WTC11 (cell line): ENCODE measurements at regions of chr19 and their contacts with region 1.

Region 1: DNA sequence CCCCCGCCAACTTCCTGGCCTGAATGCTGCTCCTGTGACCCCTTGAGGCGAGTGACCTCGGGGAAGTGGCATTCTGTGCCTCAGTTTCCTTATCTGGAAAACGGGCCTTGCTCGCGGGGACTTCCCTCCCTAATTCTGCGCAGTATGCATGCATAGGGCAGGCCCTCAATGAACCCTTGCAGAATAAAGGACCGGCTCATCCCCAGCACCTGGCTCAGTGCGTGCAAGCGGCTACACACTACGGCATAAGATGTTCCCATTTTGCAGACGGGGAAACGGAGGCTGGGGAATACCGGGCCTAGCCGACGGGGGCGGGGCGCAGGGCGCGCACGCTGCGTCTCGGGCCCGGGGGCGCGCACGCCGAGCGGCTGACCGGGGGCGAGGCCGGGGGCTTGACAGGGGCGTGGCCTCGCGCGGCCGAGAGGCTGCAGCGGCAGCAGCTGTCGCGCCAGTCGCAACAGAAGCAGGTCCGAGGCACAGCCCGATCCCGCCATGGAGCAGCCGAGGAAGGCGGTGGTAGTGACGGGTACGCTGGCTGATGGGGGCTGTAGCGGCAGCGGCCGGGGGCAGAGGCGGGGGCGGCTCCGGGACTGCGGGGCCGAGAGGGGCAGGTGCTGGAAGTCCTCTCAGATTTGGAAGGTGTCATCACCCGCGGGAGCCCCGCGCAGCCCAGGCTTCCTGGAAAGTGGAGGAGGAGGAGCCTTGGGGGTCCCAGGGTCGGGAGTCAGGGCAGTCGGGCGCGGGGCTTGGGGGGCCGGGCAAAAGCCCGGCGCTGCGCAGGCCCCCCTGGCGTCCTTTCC is at the start of gene PGPEP1:
- DNase-seq: peak; percentile 81
- ATAC-seq: peak; percentile 44
- H3K4me3 Mint-ChIP-seq: peak within 1 kb of the TSS; percentile 79
- H3K27ac Mint-ChIP-seq: peak within 1 kb of the TSS; percentile 96; the same call in 1 of the 2 replicates
- H3K4me1 Mint-ChIP-seq: peaks cover 43% of the 10 kb centered on the region
- H3K27me3 Mint-ChIP-seq: no peaks in the 10 kb centered on the region
- CTCF ChIP-seq: no peak
- total RNA-seq, gene PGPEP1: 39.2 to 68.1 TPM (median 40.8 TPM) in 3 replicates

Region 2: GRCh38 chr19:18274781-18275356 is 65.5 kb before region 1 on chr19:
- CTCF ChIA-PET with region 1: interaction called, 61 read pairs
- POLR2A ChIA-PET with region 1: interaction called, 4 read pairs
- DNase-seq: no peak
- ATAC-seq: no peak
- H3K4me3 Mint-ChIP-seq: no peak overlapping the region
- H3K27ac Mint-ChIP-seq: peak overlapping the region; percentile 53; the same call in 1 of the 2 replicates
- H3K4me1 Mint-ChIP-seq: peaks cover 19% of the 10 kb centered on the region
- H3K27me3 Mint-ChIP-seq: peaks cover 11% of the 10 kb centered on the region
- CTCF ChIP-seq: no peak

Region 3: DNA sequence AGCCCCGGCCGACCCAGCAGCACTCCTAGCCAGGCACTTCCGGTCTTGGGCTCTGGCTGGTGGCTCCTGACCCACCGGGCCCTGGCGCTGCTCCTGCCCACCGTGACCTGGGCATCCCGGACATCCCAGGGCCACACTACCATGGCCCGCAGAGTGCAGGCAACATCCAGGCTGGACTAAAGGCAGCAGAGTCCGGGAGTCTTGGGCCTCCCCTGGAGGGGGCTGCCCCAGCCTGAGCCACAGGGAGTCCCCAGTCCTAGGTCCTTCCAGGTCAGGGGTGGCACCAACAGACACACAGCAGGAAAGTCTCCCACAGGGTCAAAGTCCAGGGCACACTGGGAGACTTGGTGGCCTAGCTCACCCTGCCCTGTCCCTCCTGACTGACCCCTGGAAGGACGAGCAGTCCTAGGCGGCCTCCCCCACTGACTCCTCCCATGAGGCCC is 28.3 kb before region 1 on chr19:
- CTCF ChIA-PET with region 1: no interaction called
- POLR2A ChIA-PET with region 1: no interaction called
- DNase-seq: no peak
- ATAC-seq: no peak
- H3K4me3 Mint-ChIP-seq: no peak overlapping the region
- H3K27ac Mint-ChIP-seq: no peak overlapping the region
- H3K4me1 Mint-ChIP-seq: peaks cover 5% of the 10 kb centered on the region
- H3K27me3 Mint-ChIP-seq: no peaks in the 10 kb centered on the region
- CTCF ChIP-seq: no peak

Region 4: DNA sequence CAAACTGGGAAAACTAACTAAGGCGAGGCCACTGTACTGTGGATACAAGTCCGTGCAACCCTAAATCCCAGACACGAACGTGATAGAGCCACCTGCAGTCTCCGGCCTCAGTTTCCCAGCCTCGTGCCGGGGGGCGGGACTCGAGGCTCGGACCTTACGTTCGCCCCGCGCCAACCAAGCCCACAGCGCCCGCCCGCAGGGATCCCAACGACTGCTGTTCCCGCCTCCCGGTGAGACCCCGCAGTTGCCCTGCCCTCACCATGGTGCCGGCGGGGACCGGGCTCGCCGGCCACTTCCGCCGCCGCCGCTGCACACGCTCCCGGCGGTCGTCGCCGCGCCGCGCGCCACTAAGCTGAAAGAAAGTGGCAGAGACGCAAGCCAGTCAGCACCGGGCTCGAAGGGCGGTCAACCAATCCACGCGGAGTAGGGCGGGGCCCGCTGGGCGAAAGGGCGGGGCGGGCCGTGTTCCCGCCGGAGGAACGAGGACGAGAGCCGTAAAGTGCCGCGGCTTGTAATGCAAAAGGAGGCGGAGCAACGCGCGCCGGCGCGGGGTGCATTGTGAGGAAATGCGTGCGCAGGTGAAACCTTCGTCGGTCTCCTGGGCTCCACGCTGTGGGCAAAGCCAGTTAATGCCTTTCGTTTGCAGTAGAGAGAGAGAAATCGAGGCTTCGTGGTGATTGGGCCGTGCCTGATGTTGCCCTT is 17.5 kb before region 1 on chr19 and contains the start of gene LSM4:
- CTCF ChIA-PET with region 1: interaction called, 17 read pairs
- POLR2A ChIA-PET with region 1: interaction called, 3 read pairs
- DNase-seq: peak; percentile 100
- ATAC-seq: peak; percentile 93
- H3K4me3 Mint-ChIP-seq: peak within 1 kb of the TSS; percentile 86
- H3K27ac Mint-ChIP-seq: peak within 1 kb of the TSS; percentile 100
- H3K4me1 Mint-ChIP-seq: peaks cover 42% of the 10 kb centered on the region
- H3K27me3 Mint-ChIP-seq: no peaks in the 10 kb centered on the region; the same call in 1 of the 2 replicates
- CTCF ChIP-seq: no peak
- total RNA-seq, gene LSM4: 373 to 434 TPM (median 409 TPM) in 3 replicates

Region 5: DNA sequence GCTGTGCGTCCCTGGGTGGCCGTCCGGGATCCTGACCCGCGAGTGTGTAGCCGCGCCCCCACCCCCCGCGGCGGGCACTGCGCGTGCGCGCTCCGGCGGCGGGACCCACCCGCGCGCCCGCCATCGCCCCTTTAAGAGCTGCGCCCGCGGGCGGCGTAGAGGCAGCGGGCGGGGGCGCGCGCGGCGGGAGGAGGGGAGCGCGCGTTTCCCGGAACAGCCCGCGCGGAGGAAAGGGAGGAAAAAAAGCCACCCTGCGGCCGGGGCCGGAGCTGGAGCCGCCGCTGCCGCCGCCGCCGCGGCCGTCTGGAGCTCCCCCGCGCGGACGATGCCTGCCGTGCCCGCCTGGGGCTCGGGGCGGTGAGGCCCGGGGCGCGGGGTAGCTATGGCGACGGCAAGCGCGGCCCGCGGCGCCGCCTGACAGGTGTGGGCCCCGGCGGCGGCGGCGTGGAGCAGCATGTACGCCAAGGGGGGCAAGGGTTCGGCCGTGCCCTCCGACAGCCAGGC is 78.9 kb after region 1 on chr19 and contains the start of gene SSBP4:
- CTCF ChIA-PET with region 1: interaction called, 10 read pairs
- POLR2A ChIA-PET with region 1: no interaction called
- DNase-seq: peak; percentile 69
- ATAC-seq: peak; percentile 5; the same call in 1 of the 2 replicates
- H3K4me3 Mint-ChIP-seq: peak within 1 kb of the TSS; percentile 72
- H3K27ac Mint-ChIP-seq: no peak within 1 kb of the TSS
- H3K4me1 Mint-ChIP-seq: peaks cover 30% of the 10 kb centered on the region
- H3K27me3 Mint-ChIP-seq: peaks cover 32% of the 10 kb centered on the region
- CTCF ChIP-seq: no peak
- total RNA-seq, gene SSBP4: 44.5 to 51.2 TPM (median 47.4 TPM) in 3 replicates